Heart left ventricle (tissue), 16 donors: ENCODE measurements at regions of chr10 and their contacts with region 1.

Region 1: GRCh38 chr10:21083871-21084295 is 186.8 kb upstream of the NEBL start:
- DNase-seq: no peak
- ATAC-seq: no peak
- H3K4me3 ChIP-seq: no peak overlapping the region
- H3K27ac ChIP-seq: no peak overlapping the region
- H3K4me1 ChIP-seq: peaks cover 0 to 2% (median 0%) of the 10 kb centered on the region in 12 donors
- H3K27me3 ChIP-seq: no peaks in the 10 kb centered on the region
- CTCF ChIP-seq: no peak
- POLR2A ChIP-seq: no peak

Region 2: DNA sequence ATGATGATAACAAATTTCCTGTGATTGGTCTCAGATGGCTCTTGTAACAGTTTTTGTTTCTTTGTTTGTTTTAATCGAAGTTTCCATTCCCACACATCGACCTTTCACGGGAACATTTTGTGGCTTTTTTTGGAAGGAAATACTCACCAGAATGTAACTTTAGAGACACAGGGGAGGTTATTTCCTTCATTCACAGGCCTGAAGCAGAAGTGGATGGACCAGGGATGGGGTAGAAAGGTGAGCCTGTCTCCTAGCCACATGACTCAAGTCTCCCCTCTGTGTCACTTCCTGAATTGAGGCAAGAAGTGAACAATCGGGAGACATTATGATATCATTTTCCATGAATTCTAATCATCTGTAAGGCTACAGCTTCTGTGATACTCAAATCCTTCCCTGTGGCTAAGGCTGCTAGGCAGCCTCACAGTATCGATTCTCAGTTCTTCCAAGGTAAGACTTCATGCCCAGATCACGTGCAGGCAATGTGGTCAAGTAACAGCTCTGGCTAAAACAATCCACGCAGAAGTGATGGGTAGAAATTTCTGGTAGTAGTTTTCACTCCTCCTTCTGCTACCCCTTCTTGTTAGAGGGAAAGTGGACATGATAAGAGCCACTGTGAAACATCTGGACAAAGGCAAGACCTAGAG is 17.1 kb after region 1 on chr10:
- intact Hi-C with region 1: no loop called
- DNase-seq: no peak
- ATAC-seq: peak in 3 of 4 donors; percentile 39 to 79 (median 61)
- H3K4me3 ChIP-seq: no peak overlapping the region
- H3K27ac ChIP-seq: peak overlapping the region in 4 of 12 donors; percentile 11 to 46 (median 32)
- H3K4me1 ChIP-seq: peaks cover 0 to 16% (median 0%) of the 10 kb centered on the region in 12 donors
- H3K27me3 ChIP-seq: no peaks in the 10 kb centered on the region
- CTCF ChIP-seq: no peak
- POLR2A ChIP-seq: no peak

Region 3: DNA sequence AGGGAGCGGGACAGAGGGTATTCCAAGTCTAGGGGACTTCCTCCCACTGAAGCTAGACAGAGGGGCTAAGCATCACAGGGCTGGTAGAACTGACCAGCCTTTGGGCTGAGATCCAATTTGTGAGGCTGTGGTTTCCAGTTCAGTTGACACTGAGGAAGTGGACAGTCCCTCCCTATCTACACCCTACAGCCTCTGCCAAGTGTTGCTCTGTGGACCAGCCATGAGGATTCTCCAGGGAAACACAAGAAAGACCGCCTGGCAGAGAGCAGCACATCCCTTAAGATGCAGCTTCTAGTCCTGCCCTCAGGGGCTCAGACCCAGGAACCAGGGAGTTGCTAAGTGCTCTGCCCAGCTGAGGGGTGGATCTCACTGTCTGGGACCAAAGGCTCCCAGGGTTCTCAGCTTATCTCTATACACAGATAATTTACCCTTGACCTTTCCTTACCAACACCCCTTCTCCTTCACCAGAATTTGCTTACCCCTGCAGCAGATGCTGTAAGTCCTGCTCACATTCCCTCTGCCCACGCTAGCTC is 189.6 kb after region 1 on chr10:
- intact Hi-C with region 1: loop called in 9 of 10 experiments (anchors 2 to 5 kb)
- DNase-seq: no peak
- ATAC-seq: peak in 2 of 4 donors; percentile 22 to 35
- H3K4me3 ChIP-seq: no peak overlapping the region
- H3K27ac ChIP-seq: no peak overlapping the region
- H3K4me1 ChIP-seq: peaks cover 0 to under 1% (median 0%) of the 10 kb centered on the region in 12 donors
- H3K27me3 ChIP-seq: no peaks in the 10 kb centered on the region
- CTCF ChIP-seq: no peak
- POLR2A ChIP-seq: no peak

Region 4: DNA sequence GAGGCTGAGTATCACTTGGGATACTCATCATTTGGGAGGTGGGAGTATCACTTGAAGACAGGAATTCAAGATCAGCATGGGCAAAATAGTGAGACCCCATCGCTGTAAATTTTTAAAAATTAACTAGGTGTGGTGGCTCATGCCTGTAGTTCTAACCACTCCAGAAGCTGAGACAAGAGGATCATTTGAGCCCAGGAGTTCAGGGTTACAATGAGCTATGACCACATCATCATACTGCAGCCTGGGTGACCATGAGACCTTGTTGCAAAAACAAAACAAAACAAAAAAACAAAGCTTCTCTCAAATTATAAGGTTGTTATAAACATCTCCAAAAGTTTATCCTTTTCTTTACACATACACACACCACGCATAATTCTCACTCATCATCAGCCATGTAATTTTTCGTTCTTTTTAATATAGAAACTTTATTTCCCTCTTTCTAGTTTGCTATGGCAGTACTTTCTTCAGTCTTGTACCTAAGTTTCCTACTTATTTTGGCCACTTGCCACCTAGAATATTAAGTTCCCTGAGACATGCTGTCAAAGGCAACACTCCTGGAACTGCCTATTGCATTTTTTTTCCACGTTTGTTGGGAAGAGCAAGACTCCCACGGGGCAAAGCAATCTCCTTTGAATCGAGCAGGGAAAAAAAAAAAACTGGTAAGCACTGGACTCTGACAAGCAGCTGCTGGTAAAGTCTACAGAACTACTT is 404.5 kb after region 1 on chr10:
- intact Hi-C with region 1: loop called in 6 of 10 experiments (anchors 10 kb)
- DNase-seq: no peak
- ATAC-seq: no peak
- H3K4me3 ChIP-seq: no peak overlapping the region
- H3K27ac ChIP-seq: no peak overlapping the region
- H3K4me1 ChIP-seq: no peaks in the 10 kb centered on the region
- H3K27me3 ChIP-seq: no peaks in the 10 kb centered on the region
- CTCF ChIP-seq: no peak
- POLR2A ChIP-seq: no peak

Region 5: GRCh38 chr10:21740989-21741388 is 657.1 kb after region 1 on chr10:
- intact Hi-C with region 1: loop called in 3 of 10 experiments (anchors 5 to 10 kb)
- DNase-seq: no peak
- ATAC-seq: no peak
- H3K4me3 ChIP-seq: no peak overlapping the region
- H3K27ac ChIP-seq: no peak overlapping the region
- H3K4me1 ChIP-seq: peaks cover 0 to 3% (median 0%) of the 10 kb centered on the region in 12 donors
- H3K27me3 ChIP-seq: no peaks in the 10 kb centered on the region
- CTCF ChIP-seq: no peak
- POLR2A ChIP-seq: no peak